Activated CD8-positive, alpha-beta T cell treated with anti-CD3 and anti-CD28 coated beads, Interleukin-2, amount 10 ng/mL, durations not matched to agents 7 days and 5 days (primary cell): ENCODE measurements at regions of chr10 and their contacts with region 1.

Region 1: DNA sequence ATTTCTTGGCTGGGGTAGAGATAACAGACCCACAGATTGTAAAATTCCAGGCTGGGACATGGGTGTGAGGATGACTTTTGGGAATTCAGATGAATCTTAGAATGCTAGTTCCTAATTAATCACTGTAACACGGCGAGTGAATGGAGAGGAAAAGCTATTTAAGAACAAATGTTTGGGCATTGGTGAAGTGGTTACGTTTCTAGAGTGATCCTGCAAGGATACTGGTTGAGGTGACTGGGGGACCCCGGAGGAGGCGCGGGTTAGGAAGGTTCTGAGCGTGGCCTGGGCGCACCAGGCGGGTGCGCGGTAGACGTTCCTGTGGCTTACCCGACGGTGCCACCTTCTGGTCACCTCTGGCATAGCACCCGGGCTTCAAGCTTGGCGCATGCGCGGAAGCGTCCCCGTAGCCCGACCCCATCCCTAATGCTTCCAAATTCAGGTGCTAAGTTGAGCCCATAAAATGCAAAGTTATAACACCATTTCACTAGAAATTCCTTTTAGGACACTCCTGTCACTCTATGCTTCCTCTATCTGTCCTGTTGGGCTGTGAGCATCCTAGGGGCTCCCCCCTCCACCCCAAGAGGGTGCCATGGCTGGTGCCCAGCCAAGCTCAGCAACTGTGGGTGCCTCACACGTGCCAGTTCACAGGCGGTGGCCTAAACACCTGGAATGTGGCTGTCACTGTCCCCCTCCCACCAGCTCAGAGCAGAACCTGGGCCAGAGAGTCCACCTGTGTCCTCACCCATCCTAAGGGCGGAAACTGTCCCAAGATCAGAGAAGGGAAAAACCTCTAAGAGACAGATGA is 104.5 kb downstream of the PTPRE start:
- DNase-seq: peak; percentile 88
- ATAC-seq: peak; percentile 92
- H3K4me3 Mint-ChIP-seq: no peak overlapping the region
- H3K27ac Mint-ChIP-seq: no peak overlapping the region
- H3K4me1 Mint-ChIP-seq: peaks cover 8% of the 10 kb centered on the region
- H3K27me3 Mint-ChIP-seq: no peaks in the 10 kb centered on the region

Region 2: DNA sequence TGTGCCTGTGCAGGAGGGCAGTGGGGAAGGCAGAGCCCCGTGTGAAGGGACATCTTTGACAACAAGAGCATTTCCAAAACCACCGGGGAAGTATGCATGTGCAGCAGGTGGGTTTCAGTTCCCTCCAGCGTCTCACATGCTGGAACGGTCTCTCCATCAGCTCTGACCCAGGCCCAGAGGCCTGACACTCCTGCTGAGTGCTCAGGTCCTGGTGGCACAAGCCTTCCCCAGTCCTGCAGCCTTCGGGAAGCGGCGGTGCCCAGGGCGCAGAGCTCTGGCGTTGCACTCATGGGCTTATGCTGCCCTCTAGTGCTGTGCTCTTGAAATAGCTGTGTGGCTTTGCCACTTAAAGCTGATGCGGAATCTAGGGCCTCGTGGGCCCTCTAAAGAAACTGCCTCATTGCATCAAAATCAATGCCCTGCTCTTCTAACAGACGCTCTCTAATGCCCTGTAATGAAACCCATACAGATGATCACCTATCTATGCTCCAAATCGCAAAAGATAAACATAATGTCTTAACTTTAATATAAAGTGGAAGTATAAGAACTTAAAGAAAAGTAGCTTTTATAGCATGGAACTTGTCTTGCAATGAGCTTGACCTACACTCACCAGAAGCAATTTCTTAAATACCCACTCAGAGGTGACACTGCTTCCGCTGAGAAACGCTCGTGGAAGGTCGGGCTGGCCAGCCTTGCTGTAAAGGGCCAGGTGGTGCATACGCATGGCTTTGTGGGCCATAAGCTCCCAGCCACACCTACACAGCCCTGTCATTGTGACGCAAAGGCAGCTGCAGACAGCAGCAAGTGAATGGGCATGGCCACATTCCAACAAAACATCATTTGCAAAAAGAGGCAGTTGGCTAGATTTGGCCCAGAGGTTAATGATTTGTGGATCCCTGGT is 157.3 kb before region 1 on chr10:
- CTCF ChIA-PET with region 1: interaction called, 11 read pairs
- POLR2A ChIA-PET with region 1: no interaction called
- DNase-seq: peak; percentile 63
- ATAC-seq: peak; percentile 86
- H3K4me3 Mint-ChIP-seq: no peak overlapping the region
- H3K27ac Mint-ChIP-seq: no peak overlapping the region
- H3K4me1 Mint-ChIP-seq: no peaks in the 10 kb centered on the region
- H3K27me3 Mint-ChIP-seq: no peaks in the 10 kb centered on the region

Region 3: DNA sequence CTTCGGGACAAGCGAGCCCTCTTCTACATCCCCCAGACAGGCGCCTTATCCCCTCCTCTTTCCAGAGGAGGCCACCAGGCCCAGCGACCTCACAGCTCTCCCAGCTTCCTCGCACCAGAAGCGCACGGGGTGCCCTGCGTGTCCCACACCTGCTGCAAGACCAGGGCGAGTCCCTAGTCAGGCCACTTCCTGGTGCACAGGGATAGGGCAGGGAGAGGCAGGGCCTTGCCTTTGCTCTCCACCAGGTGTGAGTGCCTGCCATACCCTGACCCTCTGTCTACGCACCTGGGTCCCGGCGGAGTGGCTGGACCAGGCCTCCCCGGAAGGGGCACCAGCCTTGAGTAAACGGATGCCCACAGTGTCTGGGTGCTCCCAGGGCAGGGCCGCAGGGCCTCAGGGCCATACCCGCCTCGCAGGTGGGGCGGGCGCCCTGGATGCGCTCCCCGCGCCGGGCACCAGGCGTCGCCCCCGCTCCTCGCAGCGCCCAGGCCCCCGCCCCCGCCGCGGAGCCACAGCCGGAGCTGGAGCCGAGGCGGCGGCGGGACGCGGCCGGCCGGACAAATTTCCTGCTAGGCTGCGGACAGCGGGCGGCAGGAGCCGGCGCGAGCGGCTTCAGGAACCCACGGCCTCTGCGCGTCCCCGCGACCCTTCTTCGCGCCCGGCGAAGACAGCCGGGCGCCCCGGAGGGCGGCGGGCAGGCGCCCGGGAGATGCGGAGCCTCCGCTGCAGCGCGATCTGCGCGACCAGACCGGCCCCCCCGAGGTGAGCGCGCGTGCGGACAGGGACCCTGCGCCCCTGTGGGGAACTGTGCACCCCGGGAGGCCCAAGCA is 104.6 kb before region 1 on chr10 and contains the start of gene PTPRE:
- CTCF ChIA-PET with region 1: interaction called, 82 read pairs
- POLR2A ChIA-PET with region 1: no interaction called
- DNase-seq: peak; percentile 65
- ATAC-seq: peak; percentile 97
- H3K4me3 Mint-ChIP-seq: peak within 1 kb of the TSS; percentile 12
- H3K27ac Mint-ChIP-seq: no peak within 1 kb of the TSS
- H3K4me1 Mint-ChIP-seq: no peaks in the 10 kb centered on the region
- H3K27me3 Mint-ChIP-seq: peaks cover 51% of the 10 kb centered on the region
- total RNA-seq, gene PTPRE: 21.4 to 24.5 TPM

Region 4: DNA sequence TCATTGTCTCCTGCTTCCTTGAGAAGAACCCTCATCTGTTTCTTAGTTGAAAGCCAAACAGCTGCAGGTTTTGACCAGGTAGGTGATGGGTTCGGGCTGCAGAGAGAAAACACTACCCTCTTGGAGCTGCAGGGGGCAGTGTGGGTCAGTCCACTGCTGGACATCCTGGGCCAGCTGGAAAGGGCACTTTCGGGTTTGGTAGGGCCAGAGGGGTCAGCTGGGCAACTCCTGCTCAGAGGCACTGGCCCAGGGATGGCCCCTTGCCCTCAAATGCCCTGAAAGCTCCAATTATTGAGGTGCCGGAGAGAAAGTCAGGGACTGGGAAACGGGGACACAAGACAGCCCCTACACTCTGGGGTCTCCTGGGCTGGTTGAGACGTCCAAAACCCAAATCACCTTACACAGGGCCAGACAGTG is 24.2 kb after region 1 on chr10:
- CTCF ChIA-PET with region 1: interaction called, 28 read pairs
- POLR2A ChIA-PET with region 1: no interaction called
- DNase-seq: peak; percentile 73
- ATAC-seq: peak; percentile 81
- H3K4me3 Mint-ChIP-seq: no peak overlapping the region
- H3K27ac Mint-ChIP-seq: no peak overlapping the region
- H3K4me1 Mint-ChIP-seq: peaks cover 11% of the 10 kb centered on the region
- H3K27me3 Mint-ChIP-seq: no peaks in the 10 kb centered on the region

Region 5: GRCh38 chr10:128047351-128047750 is 36.0 kb after region 1 on chr10:
- CTCF ChIA-PET with region 1: interaction called, 12 read pairs
- POLR2A ChIA-PET with region 1: interaction called, 4 read pairs
- DNase-seq: peak; percentile 93
- ATAC-seq: peak; percentile 100
- H3K4me3 Mint-ChIP-seq: peak overlapping the region; percentile 84
- H3K27ac Mint-ChIP-seq: peak overlapping the region; percentile 93
- H3K4me1 Mint-ChIP-seq: peaks cover 53% of the 10 kb centered on the region
- H3K27me3 Mint-ChIP-seq: no peaks in the 10 kb centered on the region

Region 6: DNA sequence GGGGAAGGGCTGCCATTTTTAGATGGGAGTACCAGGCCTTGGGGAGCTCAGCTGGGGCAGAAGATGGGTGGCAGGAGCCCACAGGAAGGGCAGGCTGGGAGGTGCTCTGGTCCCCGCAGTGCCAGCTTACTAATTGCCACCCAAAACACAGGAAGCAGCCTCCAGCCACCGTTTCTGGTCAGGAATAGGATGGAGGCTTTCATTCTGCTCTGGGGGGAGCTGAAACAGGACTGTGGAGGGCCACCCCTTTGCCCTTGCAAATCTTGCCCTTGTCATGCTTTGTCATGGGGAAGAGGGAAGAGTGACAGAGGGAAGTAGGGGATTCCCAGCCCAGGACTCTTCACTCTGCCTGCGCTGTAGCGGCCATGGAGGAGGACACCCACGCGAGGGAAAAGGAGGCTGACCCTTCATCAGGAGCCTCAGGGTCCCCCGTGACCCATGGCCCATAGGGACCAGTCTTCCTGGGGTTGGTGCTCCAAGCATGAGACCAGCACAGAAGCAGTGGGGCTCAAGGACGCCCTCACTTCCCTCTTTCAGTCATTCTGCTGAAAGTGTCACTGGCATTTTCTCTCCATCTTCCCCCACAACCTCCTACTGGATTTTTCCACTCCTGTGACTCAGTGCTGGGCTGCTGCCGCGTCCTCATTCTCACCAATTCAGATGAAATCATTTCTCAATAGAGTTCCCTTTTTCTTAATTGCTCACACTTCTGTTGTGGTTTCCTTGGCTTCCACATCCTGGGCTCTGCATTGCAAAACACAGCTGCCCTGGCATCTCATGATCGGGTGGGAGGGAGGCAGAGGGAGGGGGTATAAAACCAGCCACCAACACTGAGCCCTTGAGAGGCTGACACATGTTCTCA is 53.0 kb after region 1 on chr10:
- CTCF ChIA-PET with region 1: interaction called, 33 read pairs
- POLR2A ChIA-PET with region 1: no interaction called
- DNase-seq: peak; percentile 81
- ATAC-seq: peak; percentile 54
- H3K4me3 Mint-ChIP-seq: peak overlapping the region; percentile 78
- H3K27ac Mint-ChIP-seq: peak overlapping the region; percentile 85
- H3K4me1 Mint-ChIP-seq: peaks cover 78% of the 10 kb centered on the region
- H3K27me3 Mint-ChIP-seq: no peaks in the 10 kb centered on the region

Region 7: DNA sequence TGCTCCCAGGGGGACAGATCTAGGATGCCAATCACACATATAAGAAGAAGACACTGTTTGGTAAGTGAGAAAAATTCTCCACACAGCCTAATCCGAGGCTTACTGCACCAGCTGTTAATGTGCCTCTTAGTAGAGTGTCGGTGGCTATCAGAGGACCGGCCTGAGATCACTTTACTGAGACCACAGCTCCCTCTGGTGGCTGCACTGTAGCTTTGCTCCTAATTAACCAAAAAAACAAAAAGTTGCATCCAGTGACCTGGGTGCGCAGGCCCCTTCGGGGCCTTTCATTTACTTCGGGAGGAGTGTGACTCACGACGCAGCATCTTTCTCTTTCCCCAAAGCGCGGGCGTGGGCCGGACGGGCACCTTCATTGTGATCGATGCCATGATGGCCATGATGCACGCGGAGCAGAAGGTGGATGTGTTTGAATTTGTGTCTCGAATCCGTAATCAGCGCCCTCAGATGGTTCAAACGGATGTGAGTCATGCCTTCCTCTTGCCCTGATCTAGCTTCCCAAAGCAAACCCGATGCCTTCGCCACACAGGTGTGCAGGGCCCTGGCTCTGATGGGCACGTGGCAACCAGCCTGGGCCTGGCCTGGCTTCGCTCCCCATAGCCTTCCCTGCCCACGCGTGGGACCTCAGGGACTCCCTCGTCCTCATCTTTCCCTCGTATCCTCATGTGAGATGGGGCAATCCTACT is 58.1 kb after region 1 on chr10:
- CTCF ChIA-PET with region 1: interaction called, 33 read pairs
- POLR2A ChIA-PET with region 1: no interaction called
- DNase-seq: peak; percentile 87
- ATAC-seq: peak; percentile 43
- H3K4me3 Mint-ChIP-seq: no peak overlapping the region
- H3K27ac Mint-ChIP-seq: no peak overlapping the region
- H3K4me1 Mint-ChIP-seq: peaks cover 50% of the 10 kb centered on the region
- H3K27me3 Mint-ChIP-seq: no peaks in the 10 kb centered on the region

Region 8: DNA sequence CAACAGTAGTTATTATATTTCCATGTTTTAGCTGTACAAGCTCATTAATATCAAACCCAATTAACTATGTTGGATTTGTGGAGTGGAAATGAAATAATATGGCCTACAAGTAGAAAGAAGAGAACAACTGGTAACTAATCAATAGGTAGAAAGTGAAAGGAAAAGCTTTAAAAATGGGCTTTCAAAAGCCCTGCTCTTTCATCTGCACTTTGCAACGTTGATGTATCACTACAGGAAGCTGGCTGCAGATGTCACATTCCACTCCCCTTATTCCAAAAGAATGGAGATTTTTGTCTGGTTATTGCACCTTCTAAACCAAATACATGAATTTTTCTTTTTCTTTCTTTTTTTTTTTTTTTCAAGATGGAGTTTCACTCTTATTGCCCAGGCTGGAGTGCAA is 126.5 kb after region 1 on chr10:
- CTCF ChIA-PET with region 1: no interaction called
- POLR2A ChIA-PET with region 1: no interaction called
- DNase-seq: no peak
- ATAC-seq: no peak
- H3K4me3 Mint-ChIP-seq: no peak overlapping the region
- H3K27ac Mint-ChIP-seq: no peak overlapping the region
- H3K4me1 Mint-ChIP-seq: peaks cover 5% of the 10 kb centered on the region
- H3K27me3 Mint-ChIP-seq: peaks cover 9% of the 10 kb centered on the region